RWPE1 (cell line): ENCODE measurements at regions of chr1 and their contacts with region 1.

Region 1: GRCh38 chr1:43073490-43074230 is 98.4 kb downstream of the EBNA1BP2 start:
- DNase-seq: peak; percentile 77
- H3K27ac ChIP-seq: no peak overlapping the region
- CTCF ChIP-seq: peak; percentile 70

Region 2: DNA sequence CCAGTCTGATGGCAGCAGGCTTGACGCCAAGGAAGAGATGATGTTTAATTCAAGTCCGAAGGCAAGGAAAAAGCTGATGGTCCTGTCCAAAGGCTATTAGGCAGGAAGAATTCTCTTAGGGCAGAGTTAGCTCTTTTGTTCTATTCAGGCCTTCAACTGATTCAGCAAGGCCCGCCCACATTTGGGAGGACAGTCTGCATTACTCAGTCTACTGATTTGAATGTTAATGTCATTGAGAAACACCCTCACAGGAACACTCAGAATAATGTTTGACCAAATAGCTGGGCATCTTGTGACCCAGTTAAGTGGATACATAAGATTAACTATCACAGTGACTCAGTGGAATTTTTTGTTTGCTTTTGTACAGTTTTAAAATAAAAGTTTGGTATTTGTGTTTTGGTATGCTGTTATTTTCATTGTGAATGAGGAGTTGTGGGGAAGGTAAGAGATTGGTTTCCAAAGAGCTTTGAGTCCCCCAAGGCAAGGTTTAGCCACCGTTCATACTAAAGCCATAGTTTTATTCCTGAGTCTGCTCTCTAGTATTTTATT is 229.0 kb before region 1 on chr1:
- CTCF ChIA-PET with region 1: no interaction called
- POLR2A ChIA-PET with region 1: no interaction called
- DNase-seq: no peak
- H3K27ac ChIP-seq: no peak overlapping the region
- CTCF ChIP-seq: no peak

Region 3: GRCh38 chr1:42913426-42914091 is 160.1 kb before region 1 on chr1:
- CTCF ChIA-PET with region 1: interaction called, 90 read pairs
- POLR2A ChIA-PET with region 1: interaction called, 4 read pairs
- DNase-seq: peak; percentile 70
- H3K27ac ChIP-seq: no peak overlapping the region
- CTCF ChIP-seq: peak; percentile 74

Region 4: GRCh38 chr1:42924082-42924850 is 149.4 kb before region 1 on chr1:
- CTCF ChIA-PET with region 1: interaction called, 43 read pairs
- POLR2A ChIA-PET with region 1: no interaction called
- DNase-seq: peak; percentile 91
- H3K27ac ChIP-seq: peak overlapping the region; percentile 94
- CTCF ChIP-seq: no peak

Region 5: GRCh38 chr1:42936309-42937078 is 137.2 kb before region 1 on chr1:
- CTCF ChIA-PET with region 1: interaction called, 17 read pairs
- POLR2A ChIA-PET with region 1: no interaction called
- DNase-seq: peak; percentile 79
- H3K27ac ChIP-seq: peak overlapping the region; percentile 97
- CTCF ChIP-seq: no peak

Region 6: DNA sequence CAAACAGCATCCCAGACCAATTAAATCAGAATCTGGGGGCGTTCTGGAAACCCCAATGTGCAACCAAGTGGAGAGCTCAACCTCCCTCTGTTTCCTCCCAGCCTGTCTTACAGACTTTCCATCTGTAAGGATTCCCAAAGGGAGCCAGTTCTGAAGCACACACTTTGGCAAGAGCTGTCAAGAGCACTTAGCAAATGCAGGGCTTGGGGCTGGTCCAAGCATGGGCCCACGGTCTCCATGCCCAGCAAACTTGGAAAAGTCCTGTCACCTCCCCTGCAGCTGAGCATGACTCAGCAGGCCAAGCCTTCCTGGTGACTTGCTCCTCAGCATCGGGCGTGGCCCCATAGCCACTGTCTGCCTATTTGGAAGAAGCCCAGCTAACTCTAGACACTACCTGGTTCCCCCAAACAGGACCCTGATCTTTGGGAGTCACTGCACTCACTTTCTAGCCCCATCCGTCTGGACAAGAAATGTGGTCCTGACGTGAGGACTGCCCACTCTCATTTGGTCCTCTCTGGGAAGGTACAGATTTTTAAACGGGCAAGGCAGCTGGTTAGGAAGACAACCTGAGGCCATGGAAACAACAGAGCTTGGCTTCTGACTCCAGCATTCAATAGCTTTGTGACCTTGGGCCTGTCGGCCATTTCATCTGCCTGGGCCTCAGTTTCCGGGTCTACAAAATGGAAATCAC is 131.9 kb before region 1 on chr1:
- CTCF ChIA-PET with region 1: interaction called, 17 read pairs
- POLR2A ChIA-PET with region 1: no interaction called
- DNase-seq: peak; percentile 71
- H3K27ac ChIP-seq: peak overlapping the region; percentile 97
- CTCF ChIP-seq: no peak

Region 7: DNA sequence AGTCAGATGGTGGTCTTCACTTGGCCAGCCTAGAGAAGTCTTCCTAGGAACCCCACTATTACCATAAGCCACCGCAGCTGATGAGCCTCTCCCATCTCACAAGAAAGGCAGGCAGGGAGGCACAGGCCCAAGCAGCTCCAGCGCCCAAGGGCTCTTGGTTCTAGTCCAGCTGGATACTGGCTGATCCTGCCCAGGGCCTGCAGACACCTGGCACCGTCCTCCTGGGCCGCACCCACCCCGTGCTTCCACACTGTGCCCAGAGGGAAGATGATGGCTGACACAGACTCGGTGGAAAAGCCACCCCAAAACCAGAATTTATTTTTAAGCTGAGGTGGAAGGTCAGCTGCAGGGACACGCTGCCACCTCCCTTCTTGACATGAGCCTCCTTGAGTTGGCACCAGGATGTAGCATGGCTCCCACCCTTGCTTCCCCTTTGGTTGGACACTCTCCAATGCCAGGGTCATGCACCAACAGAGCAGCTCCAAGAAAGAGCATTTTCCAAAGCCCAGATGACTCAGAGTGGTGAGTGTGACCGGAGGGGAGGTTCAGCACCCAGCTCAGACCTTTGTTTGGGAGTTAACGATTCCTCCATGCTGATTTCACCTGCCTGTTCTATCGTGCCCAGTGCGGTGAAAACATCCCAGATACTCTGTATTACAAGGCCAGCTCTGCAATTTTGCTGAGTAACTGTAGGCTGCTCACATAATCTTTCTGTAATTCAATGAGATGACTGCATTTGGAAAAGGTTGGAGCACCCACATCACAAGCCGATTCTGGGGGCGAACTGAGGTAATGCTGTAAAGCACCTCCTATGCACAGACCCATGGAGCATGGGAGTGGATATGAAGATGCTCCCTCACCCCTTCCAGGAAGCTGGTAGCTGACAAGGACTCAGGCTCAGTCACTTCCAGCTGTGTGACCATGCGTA is 51.8 kb before region 1 on chr1:
- CTCF ChIA-PET with region 1: interaction called, 11 read pairs
- POLR2A ChIA-PET with region 1: no interaction called
- DNase-seq: peak; percentile 96
- H3K27ac ChIP-seq: peak overlapping the region; percentile 97
- CTCF ChIP-seq: no peak

Region 8: GRCh38 chr1:43101061-43101460 is 27.4 kb after region 1 on chr1:
- CTCF ChIA-PET with region 1: no interaction called
- POLR2A ChIA-PET with region 1: no interaction called
- DNase-seq: no peak
- H3K27ac ChIP-seq: no peak overlapping the region
- CTCF ChIP-seq: no peak

Region 9: DNA sequence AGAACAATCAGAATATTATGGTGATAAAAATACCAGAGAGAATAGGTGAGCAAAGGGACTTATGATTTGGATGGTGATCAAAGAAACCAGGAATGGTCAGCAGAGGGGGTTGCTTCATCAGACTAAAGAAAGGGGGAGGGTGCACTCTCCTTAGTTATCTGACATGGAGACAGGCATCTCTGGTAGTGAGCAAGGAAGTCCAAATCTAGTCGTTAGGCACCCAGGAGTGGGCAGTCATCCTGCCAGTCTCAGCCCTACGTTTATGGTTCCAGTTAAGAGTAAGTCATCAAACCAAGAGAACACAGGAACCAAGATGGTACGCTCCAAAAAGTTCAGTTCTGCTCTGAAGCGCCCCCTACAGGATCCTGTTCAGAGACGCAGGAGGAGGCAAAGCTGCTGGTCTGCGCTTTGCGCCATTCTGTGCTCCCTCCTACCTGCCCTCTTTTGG is 69.8 kb after region 1 on chr1:
- CTCF ChIA-PET with region 1: interaction called, 6 read pairs
- POLR2A ChIA-PET with region 1: interaction called, 10 read pairs
- DNase-seq: no peak
- H3K27ac ChIP-seq: no peak overlapping the region
- CTCF ChIP-seq: no peak; the same call in 1 of the 2 replicates